HepG2 (cell line): ENCODE measurements at regions of chr19 and their contacts with region 1.

Region 1: DNA sequence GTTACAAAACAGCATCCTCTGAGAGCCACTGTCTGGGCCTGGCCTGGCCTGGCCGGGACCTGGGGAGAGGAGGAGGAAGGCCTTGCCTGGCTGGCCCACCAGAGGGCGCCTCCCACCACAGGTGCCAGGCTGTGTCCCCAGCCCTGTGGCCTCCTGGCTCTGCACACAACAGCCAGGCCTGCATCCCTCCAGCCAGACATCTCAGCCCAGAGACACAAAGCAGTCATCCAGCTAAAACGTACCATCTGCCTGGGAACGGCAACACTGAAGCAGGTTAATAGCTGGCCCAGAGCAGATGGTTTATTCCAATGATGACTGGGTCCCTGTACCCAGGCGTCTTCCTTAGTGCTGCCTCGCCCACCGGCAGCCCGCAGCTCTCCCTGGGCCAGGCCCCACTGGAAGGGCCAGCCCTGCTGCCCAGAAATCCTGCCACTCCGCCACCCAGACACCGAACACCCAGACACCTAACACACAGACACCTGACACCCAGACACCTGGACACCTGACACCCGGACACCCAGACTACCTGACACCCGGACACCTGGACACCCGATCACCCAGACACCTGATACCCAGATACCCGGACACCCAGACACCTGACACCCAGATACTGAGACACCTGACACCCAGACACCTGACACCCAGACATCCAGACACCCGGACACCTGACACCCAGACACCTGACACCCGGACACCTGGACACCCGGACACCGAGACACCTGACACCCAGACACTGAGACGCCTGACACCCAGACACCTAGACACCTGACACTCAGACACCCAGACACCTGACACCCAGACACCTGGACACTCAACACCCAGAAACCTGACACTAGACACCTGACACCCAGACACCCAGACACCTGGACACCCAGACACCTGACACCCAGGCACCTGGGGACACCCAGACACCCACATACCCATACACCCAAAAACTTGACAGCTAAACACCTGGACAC is 20.1 kb downstream of the C19orf12 start:
- DNase-seq: peak; percentile 66
- ATAC-seq: peak; percentile 99
- H3K4me3 ChIP-seq: no peak overlapping the region
- H3K27ac ChIP-seq: no peak overlapping the region
- H3K4me1 ChIP-seq: peaks cover 8% of the 10 kb centered on the region; the same call in 1 of the 2 replicates
- H3K27me3 ChIP-seq: no peaks in the 10 kb centered on the region
- CTCF ChIP-seq: peak; percentile 98
- EP300 ChIP-seq: no peak
- POLR2A ChIP-seq: no peak
- RAD21 ChIP-seq: peak; percentile 98

Region 2: GRCh38 chr19:29467824-29468401 is 227.0 kb before region 1 on chr19:
- CTCF ChIA-PET with region 1: interaction called, 6 read pairs
- POLR2A ChIA-PET with region 1: no interaction called
- in situ Hi-C with region 1: no loop called
- intact Hi-C with region 1: loop called (anchors 5 kb)
- DNase-seq: peak; percentile 50
- ATAC-seq: peak; percentile 89
- H3K4me3 ChIP-seq: no peak overlapping the region
- H3K27ac ChIP-seq: no peak overlapping the region
- H3K4me1 ChIP-seq: no peaks in the 10 kb centered on the region
- H3K27me3 ChIP-seq: no peaks in the 10 kb centered on the region
- CTCF ChIP-seq: peak; percentile 75
- EP300 ChIP-seq: no peak
- POLR2A ChIP-seq: no peak
- RAD21 ChIP-seq: peak; percentile 31; the same call in 1 of the 2 replicates

Region 3: GRCh38 chr19:29528350-29528945 is 166.5 kb before region 1 on chr19:
- CTCF ChIA-PET with region 1: no interaction called
- POLR2A ChIA-PET with region 1: no interaction called
- in situ Hi-C with region 1: no loop called
- intact Hi-C with region 1: loop called (anchors 1 kb)
- DNase-seq: peak; percentile 49
- ATAC-seq: peak; percentile 93
- H3K4me3 ChIP-seq: peak overlapping the region; percentile 22 to 54 (median 41); a peak in 5 of 6 replicates
- H3K27ac ChIP-seq: no peak overlapping the region
- H3K4me1 ChIP-seq: peaks cover 10% of the 10 kb centered on the region
- H3K27me3 ChIP-seq: peaks cover 4 to 18% of the 10 kb centered on the region in 2 experiments; a peak in 4 of 5 replicates
- CTCF ChIP-seq: peak; percentile 89
- EP300 ChIP-seq: no peak
- POLR2A ChIP-seq: no peak
- RAD21 ChIP-seq: peak; percentile 77

Region 4: GRCh38 chr19:29587518-29587986 is 107.4 kb before region 1 on chr19:
- CTCF ChIA-PET with region 1: no interaction called
- POLR2A ChIA-PET with region 1: no interaction called
- in situ Hi-C with region 1: no loop called
- intact Hi-C with region 1: no loop called
- DNase-seq: no peak
- ATAC-seq: no peak
- H3K4me3 ChIP-seq: no peak overlapping the region
- H3K27ac ChIP-seq: no peak overlapping the region
- H3K4me1 ChIP-seq: no peaks in the 10 kb centered on the region
- H3K27me3 ChIP-seq: peaks cover 0 to 13% of the 10 kb centered on the region in 2 experiments; a peak in 1 of 5 replicates
- CTCF ChIP-seq: no peak
- EP300 ChIP-seq: no peak
- POLR2A ChIP-seq: no peak
- RAD21 ChIP-seq: no peak

Region 5: DNA sequence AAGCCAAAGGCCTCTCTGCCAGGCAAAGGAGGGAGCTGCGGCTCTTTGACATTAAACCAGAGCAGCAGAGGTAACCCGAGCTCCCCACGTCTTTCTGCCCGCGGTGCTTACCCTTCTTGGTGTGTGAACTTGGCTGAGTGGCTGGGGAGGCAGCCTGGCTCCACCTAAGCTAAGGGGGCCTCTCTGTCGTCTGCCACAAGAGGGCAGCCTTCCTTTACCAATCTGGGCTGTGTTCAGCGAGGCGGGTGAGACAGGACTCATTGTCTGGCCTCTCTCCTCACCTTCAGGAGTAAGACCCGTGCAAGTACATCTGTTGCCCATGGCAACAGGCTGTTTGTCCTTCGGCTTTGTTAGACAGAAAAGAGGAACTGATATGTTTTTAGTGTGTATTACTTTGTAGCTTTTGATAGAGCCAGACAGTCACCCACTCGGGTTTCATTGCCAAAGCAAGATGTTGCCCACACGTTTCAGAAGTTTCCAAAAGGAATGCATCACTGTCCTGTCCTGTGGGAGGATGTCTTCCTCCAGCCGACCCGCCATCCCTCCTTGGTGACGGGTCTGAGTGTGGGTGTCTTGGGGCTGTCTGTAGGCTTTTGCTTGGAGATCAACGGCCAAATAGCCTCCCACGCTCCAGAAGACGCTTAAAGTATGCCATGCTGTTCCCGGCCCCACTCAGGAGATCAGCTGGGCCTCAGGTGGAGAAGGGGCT is 84.2 kb before region 1 on chr19:
- CTCF ChIA-PET with region 1: interaction called, 45 read pairs
- POLR2A ChIA-PET with region 1: interaction called, 3 read pairs
- in situ Hi-C with region 1: loop called (anchors 5 kb)
- intact Hi-C with region 1: no loop called
- DNase-seq: peak; percentile 64
- ATAC-seq: peak; percentile 88
- H3K4me3 ChIP-seq: no peak overlapping the region
- H3K27ac ChIP-seq: no peak overlapping the region
- H3K4me1 ChIP-seq: peaks cover 8% of the 10 kb centered on the region
- H3K27me3 ChIP-seq: no peaks in the 10 kb centered on the region; a peak in 1 of 5 replicates
- CTCF ChIP-seq: peak; percentile 94
- EP300 ChIP-seq: no peak
- POLR2A ChIP-seq: no peak
- RAD21 ChIP-seq: peak; percentile 87

Region 6: DNA sequence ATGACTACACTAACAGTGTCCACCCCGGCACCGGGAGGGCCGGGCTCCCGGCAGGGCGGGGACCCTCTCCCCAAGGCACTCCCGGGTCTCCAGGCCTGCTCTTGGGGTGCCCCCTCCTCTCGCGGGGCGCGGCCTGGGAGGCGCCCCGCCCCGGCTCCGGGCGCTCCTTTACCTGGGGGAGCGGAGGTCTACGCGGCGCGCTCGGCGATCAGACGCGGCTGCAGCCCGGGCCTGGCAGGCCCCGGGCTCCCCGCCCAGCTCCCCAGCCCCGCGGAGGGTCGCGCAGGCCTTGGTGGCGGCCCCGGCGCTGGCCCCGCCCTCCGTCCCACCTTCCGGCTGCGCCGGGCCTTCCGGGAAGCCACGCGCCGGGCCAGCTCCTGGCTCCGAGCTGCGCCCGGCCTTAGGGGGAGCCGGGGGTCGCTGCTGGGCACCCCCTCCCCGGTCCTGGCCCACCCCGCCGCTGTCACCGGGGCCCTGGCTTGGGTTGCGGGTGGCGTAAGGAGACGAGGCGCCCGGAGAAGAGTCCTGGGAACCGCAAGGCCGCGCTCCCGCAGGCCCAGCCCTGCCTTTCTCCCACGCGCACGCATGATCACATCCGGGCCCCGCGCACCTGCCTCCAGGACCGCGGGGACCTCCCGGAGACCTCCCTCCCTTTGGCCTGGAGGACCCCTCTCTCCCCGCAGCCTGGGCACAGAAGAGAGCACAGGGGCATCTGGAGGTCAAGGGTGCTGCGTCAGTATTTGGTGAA is 20.2 kb after region 1 on chr19 and contains the start of gene C19orf12:
- CTCF ChIA-PET with region 1: interaction called, 66 read pairs
- POLR2A ChIA-PET with region 1: interaction called, 15 read pairs
- in situ Hi-C with region 1: no loop called
- intact Hi-C with region 1: loop called (anchors 1 kb)
- DNase-seq: peak; percentile 18
- ATAC-seq: peak; percentile 81
- H3K4me3 ChIP-seq: peak within 1 kb of the TSS; percentile 77 to 96 (median 85)
- H3K27ac ChIP-seq: peak within 1 kb of the TSS; percentile 87
- H3K4me1 ChIP-seq: peaks cover 54% of the 10 kb centered on the region
- H3K27me3 ChIP-seq: no peaks in the 10 kb centered on the region
- CTCF ChIP-seq: no peak
- EP300 ChIP-seq: no peak
- POLR2A ChIP-seq: peak; percentile 70 to 80
- RAD21 ChIP-seq: no peak
- total RNA-seq, gene C19orf12: 34.4 and 34.8 TPM in 2 replicates

Region 7: GRCh38 chr19:29785955-29786589 is 91.1 kb after region 1 on chr19:
- CTCF ChIA-PET with region 1: no interaction called
- POLR2A ChIA-PET with region 1: no interaction called
- in situ Hi-C with region 1: no loop called
- intact Hi-C with region 1: no loop called
- DNase-seq: no peak
- ATAC-seq: peak; percentile 33; the same call in 2 of the 3 replicates
- H3K4me3 ChIP-seq: no peak overlapping the region
- H3K27ac ChIP-seq: no peak overlapping the region
- H3K4me1 ChIP-seq: no peaks in the 10 kb centered on the region
- H3K27me3 ChIP-seq: peaks cover 0 to 4% of the 10 kb centered on the region in 2 experiments; a peak in 3 of 5 replicates
- CTCF ChIP-seq: peak; percentile 55
- EP300 ChIP-seq: no peak
- POLR2A ChIP-seq: no peak
- RAD21 ChIP-seq: 0 out of 2 replicates have a peak, but pooled peaks have one; percentile 31